ENCODE measurements at regions of chr12 and their contacts with region 1.

Region 1: DNA sequence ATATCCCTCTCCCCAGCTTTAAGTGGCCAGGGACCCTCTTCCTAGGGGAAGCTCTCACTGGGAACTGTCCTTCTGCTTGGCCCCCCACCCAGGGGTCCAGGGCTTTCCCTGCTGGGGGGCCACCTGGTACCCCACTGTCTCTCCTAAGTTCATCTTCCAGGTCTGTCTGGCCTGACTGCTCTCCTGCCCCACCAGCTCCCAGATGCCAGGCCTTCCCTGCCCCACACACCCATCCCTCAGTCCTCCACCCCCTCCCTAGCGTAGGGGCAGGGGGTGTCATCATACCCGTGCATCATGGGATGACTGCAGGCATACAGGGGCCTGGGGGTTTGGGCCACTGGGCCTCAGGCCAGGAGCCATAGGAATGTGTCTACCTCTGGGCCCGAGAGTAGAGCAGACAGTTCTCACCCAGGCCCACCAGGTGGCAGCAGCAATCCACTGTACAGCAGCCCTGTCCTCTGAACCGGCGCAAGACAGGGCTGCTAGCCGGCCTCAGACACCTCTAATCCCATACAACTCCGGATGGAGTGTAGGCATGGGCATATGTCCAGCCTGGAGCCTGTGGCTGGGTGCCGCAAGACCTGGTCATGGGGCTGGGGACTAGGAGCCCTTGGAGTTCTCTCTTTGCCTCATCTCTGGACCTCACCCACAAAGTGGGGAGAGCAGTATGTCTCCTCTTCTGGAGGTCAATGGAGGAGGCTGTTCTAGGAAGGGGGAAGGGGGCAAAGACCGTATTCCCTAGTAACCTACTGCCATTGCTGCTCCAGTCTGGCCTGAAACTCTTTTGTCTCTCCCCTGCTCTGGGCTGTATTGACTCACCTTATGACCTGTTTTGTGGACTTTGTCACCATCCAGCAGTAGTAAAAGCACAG is 10.0 kb upstream of the SMARCD1 start:
- DNase-seq: peak; percentile 88
- H3K4me3 Mint-ChIP-seq: no peak overlapping the region
- H3K27ac Mint-ChIP-seq: no peak overlapping the region
- H3K4me1 Mint-ChIP-seq: peaks cover 5% of the 10 kb centered on the region
- H3K27me3 Mint-ChIP-seq: no peaks in the 10 kb centered on the region

Region 2: GRCh38 chr12:49923880-49924556 is 151.2 kb before region 1 on chr12:
- CTCF ChIA-PET with region 1: no interaction called
- intact Hi-C with region 1: no loop called
- DNase-seq: no peak
- H3K4me3 Mint-ChIP-seq: no peak overlapping the region
- H3K27ac Mint-ChIP-seq: no peak overlapping the region
- H3K4me1 Mint-ChIP-seq: no peaks in the 10 kb centered on the region
- H3K27me3 Mint-ChIP-seq: no peaks in the 10 kb centered on the region

Region 3: DNA sequence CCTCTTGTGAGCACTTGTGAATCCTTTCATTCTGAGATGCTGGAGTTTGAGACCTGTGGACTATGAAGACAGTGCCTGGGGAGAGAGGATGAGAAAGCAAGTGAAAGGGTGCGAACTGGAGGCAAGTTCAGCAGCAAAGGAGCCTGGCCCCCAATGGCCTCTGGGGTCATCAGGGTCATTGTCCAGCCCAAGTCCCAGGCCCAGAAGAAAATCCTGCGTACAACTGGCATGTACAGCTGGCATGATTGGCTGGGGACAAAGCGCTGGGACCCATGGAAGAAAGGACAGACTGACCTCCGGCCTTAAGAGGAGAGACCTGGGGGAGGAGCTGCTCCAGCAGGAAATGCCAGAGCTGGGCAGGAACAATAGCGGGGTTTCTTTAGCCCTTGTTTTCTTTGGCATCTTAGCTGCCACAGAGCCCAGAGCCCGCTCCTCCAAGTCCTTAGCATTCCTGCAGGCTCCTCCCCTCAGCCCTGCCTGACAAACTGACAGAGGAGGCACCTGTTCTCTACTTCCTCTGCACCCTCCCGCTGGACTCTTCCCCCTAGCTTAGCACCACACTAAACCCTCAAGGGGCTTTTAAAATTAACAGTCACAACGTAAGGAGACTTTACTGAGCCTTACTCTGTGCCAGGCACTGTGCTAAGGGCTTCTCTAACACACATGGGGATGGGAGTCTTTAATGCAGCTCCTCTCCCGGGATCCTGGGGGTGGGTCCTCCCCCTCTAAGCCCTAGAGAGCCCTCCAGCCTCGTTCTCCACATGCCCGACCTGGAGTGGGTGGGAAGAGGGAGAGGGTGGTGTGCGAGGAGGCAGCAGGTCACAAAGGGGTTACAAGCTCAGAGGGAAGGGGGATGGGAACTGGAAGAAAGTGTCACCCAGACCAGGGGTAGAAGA is 115.4 kb before region 1 on chr12:
- CTCF ChIA-PET with region 1: interaction called, 67 read pairs
- intact Hi-C with region 1: no loop called
- DNase-seq: no peak
- H3K4me3 Mint-ChIP-seq: no peak overlapping the region
- H3K27ac Mint-ChIP-seq: no peak overlapping the region
- H3K4me1 Mint-ChIP-seq: peaks cover 7% of the 10 kb centered on the region
- H3K27me3 Mint-ChIP-seq: peaks cover 61% of the 10 kb centered on the region

Region 4: DNA sequence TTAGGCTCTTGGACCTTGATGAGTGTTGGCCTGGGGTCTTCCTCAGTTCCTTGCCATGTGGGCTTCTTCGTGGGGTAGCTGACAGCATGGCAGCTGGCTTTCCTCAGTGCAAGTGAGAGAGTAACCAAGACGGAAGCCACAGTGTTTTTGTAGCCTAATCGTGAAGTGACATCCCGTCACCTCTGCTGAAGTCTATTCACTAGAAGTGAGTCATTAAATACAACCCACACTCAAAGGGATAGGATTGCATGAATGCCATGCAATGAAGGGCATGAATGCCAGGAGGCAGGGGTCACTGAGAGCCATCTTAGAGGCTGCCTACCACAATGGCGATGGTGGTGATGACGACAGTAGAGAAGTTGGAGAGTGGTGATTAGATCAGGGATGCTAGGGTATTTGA is 31.3 kb before region 1 on chr12:
- CTCF ChIA-PET with region 1: interaction called, 161 read pairs
- intact Hi-C with region 1: loop called (anchors 1 kb)
- DNase-seq: no peak
- H3K4me3 Mint-ChIP-seq: no peak overlapping the region
- H3K27ac Mint-ChIP-seq: no peak overlapping the region
- H3K4me1 Mint-ChIP-seq: peaks cover 5% of the 10 kb centered on the region
- H3K27me3 Mint-ChIP-seq: no peaks in the 10 kb centered on the region

Region 5: GRCh38 chr12:50055831-50056638 is 19.1 kb before region 1 on chr12:
- CTCF ChIA-PET with region 1: interaction called, 51 read pairs
- intact Hi-C with region 1: loop called (anchors 1 kb)
- DNase-seq: peak; percentile 70
- H3K4me3 Mint-ChIP-seq: peak overlapping the region; percentile 39
- H3K27ac Mint-ChIP-seq: no peak overlapping the region
- H3K4me1 Mint-ChIP-seq: peaks cover 33% of the 10 kb centered on the region
- H3K27me3 Mint-ChIP-seq: peaks cover 41% of the 10 kb centered on the region

Region 6: GRCh38 chr12:50132505-50133135 is 57.4 kb after region 1 on chr12:
- CTCF ChIA-PET with region 1: interaction called, 5 read pairs
- intact Hi-C with region 1: loop called (anchors 2 kb)
- DNase-seq: no peak
- H3K4me3 Mint-ChIP-seq: no peak overlapping the region
- H3K27ac Mint-ChIP-seq: peak overlapping the region; percentile 81
- H3K4me1 Mint-ChIP-seq: peaks cover 8% of the 10 kb centered on the region
- H3K27me3 Mint-ChIP-seq: no peaks in the 10 kb centered on the region

Region 7: GRCh38 chr12:50174971-50175715 is 100.0 kb after region 1 on chr12:
- CTCF ChIA-PET with region 1: interaction called, 25 read pairs
- intact Hi-C with region 1: loop called (anchors 1 kb)
- DNase-seq: no peak
- H3K4me3 Mint-ChIP-seq: no peak overlapping the region
- H3K27ac Mint-ChIP-seq: no peak overlapping the region
- H3K4me1 Mint-ChIP-seq: no peaks in the 10 kb centered on the region
- H3K27me3 Mint-ChIP-seq: no peaks in the 10 kb centered on the region

Region 8: GRCh38 chr12:50314629-50315312 is 239.6 kb after region 1 on chr12:
- CTCF ChIA-PET with region 1: no interaction called
- intact Hi-C with region 1: loop called (anchors 1 kb)
- DNase-seq: no peak
- H3K4me3 Mint-ChIP-seq: no peak overlapping the region
- H3K27ac Mint-ChIP-seq: no peak overlapping the region
- H3K4me1 Mint-ChIP-seq: no peaks in the 10 kb centered on the region
- H3K27me3 Mint-ChIP-seq: no peaks in the 10 kb centered on the region

Measured in activated naive CD4-positive, alpha-beta T cell treated with anti-CD3 and anti-CD28 coated beads for 36 hours (primary cell).